ENCODE measurements at regions of chr11 and their contacts with region 1.

Region 1: DNA sequence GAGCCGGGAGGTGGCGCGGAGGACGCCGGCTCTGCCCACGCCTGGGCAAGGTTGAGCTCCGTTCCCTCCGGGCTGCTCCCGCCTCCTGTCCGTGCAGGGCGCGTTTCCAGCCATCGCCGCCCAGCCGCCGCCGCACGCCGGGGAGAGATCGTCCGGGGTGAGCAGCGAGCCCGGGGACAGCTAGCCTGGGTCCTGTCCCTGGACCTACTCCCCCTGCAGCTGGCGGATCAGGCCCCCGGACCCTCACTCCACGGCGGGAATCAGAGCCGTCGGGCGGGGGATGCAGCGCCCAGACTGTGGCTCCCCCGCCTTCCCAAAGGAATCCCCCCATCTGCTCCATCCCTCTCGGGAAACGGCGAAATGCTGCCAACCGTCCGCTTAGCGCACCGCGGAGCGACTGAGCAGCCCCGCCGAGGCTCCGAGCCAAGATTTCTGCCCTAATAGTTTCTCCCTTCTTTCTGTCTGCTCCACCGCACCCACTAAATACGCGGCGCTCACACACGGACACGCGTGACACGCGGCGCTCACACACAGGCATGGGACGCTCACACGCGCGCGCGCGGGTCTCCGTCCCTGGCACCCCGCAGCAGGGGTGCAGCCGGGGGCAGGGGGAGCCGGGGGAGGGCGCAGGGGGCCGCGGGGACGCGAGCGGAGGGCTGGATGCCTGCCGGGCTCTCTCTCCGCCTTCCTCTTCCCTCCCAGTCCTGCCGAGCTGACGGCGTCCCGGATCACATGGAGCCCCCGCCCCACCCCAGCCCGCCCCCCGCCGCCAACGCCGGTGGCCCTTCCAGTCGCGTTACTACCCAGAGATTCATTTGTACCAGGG is at the start of gene KCNJ5:
- DNase-seq: peak; percentile 58 to 63

Region 2: GRCh38 chr11:128965485-128965884 is 74.7 kb after region 1 on chr11:
- in situ Hi-C with region 1: loop called (anchors 5 kb)
- DNase-seq: no peak